BJ (cell line): ENCODE measurements at regions of chr1 and their contacts with region 1.

Region 1: GRCh38 chr1:156129706-156130581 is 15.4 kb downstream of the LMNA start:
- DNase-seq: peak; percentile 91
- H3K4me3 ChIP-seq: peak overlapping the region; percentile 15; the same call in 1 of the 2 replicates
- H3K27me3 ChIP-seq: no peaks in the 10 kb centered on the region
- CTCF ChIP-seq: peak; percentile 94

Region 2: GRCh38 chr1:156114101-156114916 is 15.6 kb before region 1 on chr1 and contains the start of gene LMNA:
- CTCF ChIA-PET with region 1: interaction called, 983 read pairs
- POLR2A ChIA-PET with region 1: interaction called, 12 read pairs
- DNase-seq: peak; percentile 63
- H3K4me3 ChIP-seq: peak within 1 kb of the TSS; percentile 100
- H3K27me3 ChIP-seq: no peaks in the 10 kb centered on the region
- CTCF ChIP-seq: no peak
- polyA plus RNA-seq, gene LMNA: 537 and 840 TPM in 2 replicates

Region 3: GRCh38 chr1:156119503-156120209 is 10.3 kb before region 1 on chr1:
- CTCF ChIA-PET with region 1: interaction called, 113 read pairs
- POLR2A ChIA-PET with region 1: interaction called, 12 read pairs
- DNase-seq: no peak
- H3K4me3 ChIP-seq: peak overlapping the region; percentile 16
- H3K27me3 ChIP-seq: no peaks in the 10 kb centered on the region
- CTCF ChIP-seq: 0 out of 2 replicates have a peak, but pooled peaks have one; percentile 12

Region 4: DNA sequence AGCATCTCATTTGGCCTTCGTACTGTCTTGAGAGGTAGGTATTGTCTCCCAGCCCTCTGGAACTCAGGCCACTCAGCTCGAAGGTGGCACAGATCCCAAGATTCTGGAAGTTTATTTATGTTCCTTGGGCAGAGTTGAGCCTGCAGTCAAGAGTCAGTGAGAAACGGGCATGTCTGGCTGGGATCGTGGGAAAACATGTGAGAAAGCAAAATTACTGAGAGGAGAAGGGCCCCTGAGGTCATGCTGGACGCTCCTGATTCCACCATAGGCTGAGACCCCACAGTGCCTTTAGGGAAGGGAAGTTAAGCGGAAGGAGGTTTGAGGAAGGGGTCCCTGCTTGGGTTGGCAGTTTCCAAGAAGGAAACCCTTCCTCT is 10.9 kb after region 1 on chr1:
- CTCF ChIA-PET with region 1: interaction called, 34 read pairs
- POLR2A ChIA-PET with region 1: no interaction called
- DNase-seq: no peak
- H3K4me3 ChIP-seq: no peak overlapping the region
- H3K27me3 ChIP-seq: no peaks in the 10 kb centered on the region
- CTCF ChIP-seq: no peak

Region 5: GRCh38 chr1:156664767-156665411 is 534.9 kb after region 1 on chr1:
- CTCF ChIA-PET with region 1: no interaction called
- POLR2A ChIA-PET with region 1: no interaction called
- DNase-seq: no peak
- H3K4me3 ChIP-seq: no peak overlapping the region
- H3K27me3 ChIP-seq: no peaks in the 10 kb centered on the region
- CTCF ChIP-seq: no peak